Right lobe of liver (tissue), 6 donors: ENCODE measurements at regions of chr19 and their contacts with region 1.

Region 1: DNA sequence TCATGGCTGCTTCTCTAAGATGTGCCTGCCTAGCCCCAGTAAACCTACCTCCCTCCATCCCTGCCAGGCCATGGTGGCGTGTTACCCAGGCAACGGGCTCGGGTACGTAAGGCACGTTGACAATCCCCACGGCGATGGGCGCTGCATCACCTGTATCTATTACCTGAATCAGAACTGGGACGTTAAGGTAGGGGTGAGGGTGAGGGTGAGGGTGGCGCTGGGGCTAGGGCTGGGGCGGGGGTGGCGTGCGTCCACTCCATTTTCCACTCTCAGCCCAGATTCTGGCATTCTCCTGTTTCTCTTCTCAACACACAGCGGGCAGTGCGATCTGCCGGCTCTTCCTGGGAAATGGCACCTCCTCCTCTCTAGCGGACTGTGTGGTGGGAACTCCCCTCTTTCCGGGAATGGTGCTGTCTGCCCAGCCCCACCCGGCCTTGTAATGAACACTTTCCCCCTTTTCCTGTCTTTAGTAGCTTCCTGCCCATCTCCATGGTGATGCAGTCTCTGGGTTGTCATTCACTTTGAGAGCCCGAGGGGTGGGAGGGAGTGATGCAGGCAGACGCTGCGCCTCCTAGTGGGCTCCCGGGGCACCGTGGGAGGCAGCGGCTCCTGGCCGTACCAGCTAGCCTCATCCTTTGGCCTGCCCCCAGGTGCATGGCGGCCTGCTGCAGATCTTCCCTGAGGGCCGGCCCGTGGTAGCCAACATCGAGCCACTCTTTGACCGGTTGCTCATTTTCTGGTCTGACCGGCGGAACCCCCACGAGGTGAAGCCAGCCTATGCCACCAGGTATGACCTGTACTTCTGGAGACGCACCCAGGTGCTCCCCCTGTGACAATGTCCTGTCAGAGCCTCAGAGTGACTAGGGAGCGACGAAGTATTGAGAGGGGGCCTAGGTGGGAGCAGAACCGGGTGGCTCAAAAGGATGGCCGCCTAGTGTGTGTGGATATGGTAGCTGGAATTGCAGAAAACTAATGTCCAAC is 7.8 kb downstream of the EGLN2 start:
- DNase-seq: peak; percentile 66 to 70 (median 69)
- ATAC-seq: peak; percentile 17 to 40 (median 20)
- H3K4me3 ChIP-seq: no peak overlapping the region
- H3K27ac ChIP-seq: peak overlapping the region in 2 of 3 donors; percentile 2 to 41
- H3K4me1 ChIP-seq: peaks cover 0 to 45% (median 21%) of the 10 kb centered on the region in 4 donors
- H3K27me3 ChIP-seq: no peaks in the 10 kb centered on the region
- CTCF ChIP-seq: peak; percentile 41 to 67 (median 56)
- POLR2A ChIP-seq: no peak

Region 2: GRCh38 chr19:40662921-40663694 is 143.7 kb before region 1 on chr19:
- intact Hi-C with region 1: loop called in 1 of 2 experiments (anchors 10 kb)
- DNase-seq: peak; percentile 91 to 94 (median 91)
- ATAC-seq: peak; percentile 85 to 96 (median 91)
- H3K4me3 ChIP-seq: peak overlapping the region; percentile 60 to 81 (median 81)
- H3K27ac ChIP-seq: peak overlapping the region; percentile 35 to 64 (median 52)
- H3K4me1 ChIP-seq: peaks cover 0 to 4% (median 1%) of the 10 kb centered on the region in 4 donors
- H3K27me3 ChIP-seq: no peaks in the 10 kb centered on the region
- CTCF ChIP-seq: peak; percentile 97 to 99 (median 98)
- POLR2A ChIP-seq: peak; percentile 14